PC-9 (cell line): ENCODE measurements at regions of chr1 and their contacts with region 1.

Region 1: DNA sequence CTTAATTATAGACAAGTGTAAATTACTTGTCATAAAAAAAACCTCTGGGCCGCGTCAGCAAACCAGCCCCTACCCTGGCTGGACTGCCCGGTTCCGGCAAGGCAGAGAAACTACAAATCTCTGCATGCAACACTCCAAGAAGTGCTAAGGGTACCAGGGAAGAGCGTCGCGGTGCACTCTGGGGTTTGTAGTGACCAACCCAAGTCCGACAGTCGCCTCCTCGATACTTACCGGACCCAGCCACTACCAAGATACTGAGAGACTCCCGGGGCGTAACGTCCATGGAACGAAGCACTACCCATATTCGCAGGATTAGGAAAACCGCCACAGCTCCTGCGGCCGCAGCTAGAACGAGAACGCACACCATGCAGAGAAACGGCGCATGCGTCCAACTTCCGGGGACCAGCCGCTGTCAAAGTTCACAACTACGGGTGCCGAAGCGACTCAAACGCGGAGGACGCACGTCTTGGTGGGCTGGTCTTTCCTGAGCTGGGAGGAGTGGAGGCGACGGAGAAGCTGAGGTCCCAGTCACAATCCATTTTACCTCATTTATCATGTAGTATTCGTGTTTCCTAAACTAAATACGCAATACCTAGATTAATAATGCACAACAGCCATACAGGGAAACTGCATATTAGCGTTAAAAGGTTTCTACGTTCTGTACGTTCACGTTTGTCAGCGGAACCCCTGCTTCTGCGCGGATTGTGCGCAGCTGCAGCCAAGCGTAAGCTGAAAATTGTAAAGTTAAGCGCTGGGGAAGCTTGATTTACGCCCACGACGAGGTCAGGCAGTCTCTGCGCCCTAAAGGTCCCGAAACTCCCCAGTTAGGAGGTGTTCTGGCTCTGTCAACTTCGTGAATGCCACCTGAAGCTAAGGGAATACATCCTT is at the start of gene ALG14:
- DNase-seq: peak; percentile 89 to 90
- H3K4me3 ChIP-seq: peak within 1 kb of the TSS; percentile 68
- H3K27ac ChIP-seq: peak within 1 kb of the TSS; percentile 38
- H3K4me1 ChIP-seq: peaks cover 6% of the 10 kb centered on the region
- H3K27me3 ChIP-seq: no peaks in the 10 kb centered on the region
- CTCF ChIP-seq: no peak
- total RNA-seq, gene ALG14: 7.7 and 8.6 TPM in 2 replicates

Region 2: DNA sequence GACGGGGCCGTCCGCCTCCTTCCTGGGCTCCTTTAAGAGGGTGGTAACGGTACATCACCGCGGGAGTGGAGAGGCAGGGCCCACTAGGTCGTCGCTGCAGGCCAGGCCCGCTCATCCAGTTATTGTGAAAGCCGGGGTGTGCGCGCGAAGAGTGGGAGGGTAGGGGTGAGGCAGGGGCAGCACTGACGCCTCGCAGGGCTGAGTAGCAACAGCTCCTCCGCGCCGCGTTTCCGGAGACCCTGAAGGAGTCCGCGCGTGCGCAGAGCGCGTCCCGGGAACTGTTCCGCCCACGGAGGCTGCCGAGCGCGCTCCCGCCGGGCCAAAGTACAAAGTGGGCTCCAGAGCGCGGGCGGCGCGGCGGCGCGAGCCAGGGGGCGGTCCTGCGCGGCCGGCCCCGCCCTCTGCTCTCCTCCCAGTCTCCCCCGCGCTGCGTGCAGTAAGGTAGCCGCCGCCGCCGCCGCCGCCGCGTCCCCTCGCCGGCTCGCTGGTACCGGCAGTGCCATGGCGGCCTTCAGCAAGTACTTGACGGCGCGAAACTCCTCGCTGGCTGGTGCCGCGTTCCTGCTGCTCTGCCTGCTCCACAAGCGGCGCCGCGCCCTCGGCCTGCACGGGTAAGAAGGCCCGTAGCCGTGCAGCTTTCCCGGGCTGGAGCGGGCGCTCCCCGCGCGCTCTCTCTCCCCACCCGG is 654.7 kb before region 1 on chr1 and contains the start of gene ABCD3:
- CTCF ChIA-PET with region 1: no interaction called
- POLR2A ChIA-PET with region 1: interaction called, 10 read pairs
- intact Hi-C with region 1: no loop called
- DNase-seq: peak; percentile 94 to 98
- H3K4me3 ChIP-seq: peak within 1 kb of the TSS; percentile 91
- H3K27ac ChIP-seq: peak within 1 kb of the TSS; percentile 45
- H3K4me1 ChIP-seq: peaks cover 47% of the 10 kb centered on the region
- H3K27me3 ChIP-seq: no peaks in the 10 kb centered on the region
- CTCF ChIP-seq: no peak
- total RNA-seq, gene ABCD3: 41.7 and 51.6 TPM in 2 replicates

Region 3: GRCh38 chr1:95116580-95117206 is 43.9 kb after region 1 on chr1:
- CTCF ChIA-PET with region 1: no interaction called
- POLR2A ChIA-PET with region 1: interaction called, 3 read pairs
- intact Hi-C with region 1: loop called (anchors 1 kb)
- DNase-seq: peak; percentile 71 to 80
- H3K4me3 ChIP-seq: peak overlapping the region; percentile 83
- H3K27ac ChIP-seq: peak overlapping the region; percentile 23
- H3K4me1 ChIP-seq: peaks cover 29% of the 10 kb centered on the region
- H3K27me3 ChIP-seq: no peaks in the 10 kb centered on the region
- CTCF ChIP-seq: peak; percentile 92